OCI-LY7 (cell line): ENCODE measurements at regions of chr6 and their contacts with region 1.

Region 1: DNA sequence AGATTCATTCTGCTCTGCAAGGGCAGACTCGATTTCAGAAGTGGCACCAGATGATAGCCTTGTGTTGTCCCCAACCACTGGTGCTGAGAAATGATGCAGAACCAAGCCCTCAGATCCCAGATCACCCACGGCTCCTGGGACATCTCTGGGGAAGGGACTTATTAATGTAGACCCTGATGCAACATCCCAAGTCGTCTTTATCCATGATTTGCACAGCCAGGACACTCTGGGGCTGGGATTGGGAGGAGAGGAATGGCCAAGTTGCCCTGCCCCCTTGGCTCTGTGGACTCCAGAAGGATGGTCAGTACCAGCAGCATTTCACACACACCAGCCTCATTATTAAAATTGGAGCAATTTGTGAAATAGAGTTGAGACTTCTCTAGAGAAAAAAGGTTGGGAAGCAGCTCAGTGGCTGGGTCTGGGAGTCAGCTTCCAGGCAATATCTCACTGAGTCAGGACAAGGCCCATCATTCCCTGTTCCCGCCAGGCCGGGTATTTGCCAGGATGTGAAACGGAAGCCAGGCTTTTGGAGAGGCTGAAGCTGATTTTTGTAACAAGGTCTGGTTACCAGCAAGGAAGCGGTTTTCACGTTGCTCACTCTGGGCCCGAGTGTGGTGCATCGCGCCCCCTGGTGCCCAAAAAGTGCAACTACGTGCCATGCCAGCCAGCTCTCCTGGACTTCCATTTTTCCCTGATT is 67.4 kb downstream of the ZBTB2 start:
- DNase-seq: peak; percentile 65
- H3K4me3 ChIP-seq: no peak overlapping the region
- H3K27ac ChIP-seq: no peak overlapping the region
- H3K4me1 ChIP-seq: no peaks in the 10 kb centered on the region
- CTCF ChIP-seq: peak; percentile 97

Region 2: DNA sequence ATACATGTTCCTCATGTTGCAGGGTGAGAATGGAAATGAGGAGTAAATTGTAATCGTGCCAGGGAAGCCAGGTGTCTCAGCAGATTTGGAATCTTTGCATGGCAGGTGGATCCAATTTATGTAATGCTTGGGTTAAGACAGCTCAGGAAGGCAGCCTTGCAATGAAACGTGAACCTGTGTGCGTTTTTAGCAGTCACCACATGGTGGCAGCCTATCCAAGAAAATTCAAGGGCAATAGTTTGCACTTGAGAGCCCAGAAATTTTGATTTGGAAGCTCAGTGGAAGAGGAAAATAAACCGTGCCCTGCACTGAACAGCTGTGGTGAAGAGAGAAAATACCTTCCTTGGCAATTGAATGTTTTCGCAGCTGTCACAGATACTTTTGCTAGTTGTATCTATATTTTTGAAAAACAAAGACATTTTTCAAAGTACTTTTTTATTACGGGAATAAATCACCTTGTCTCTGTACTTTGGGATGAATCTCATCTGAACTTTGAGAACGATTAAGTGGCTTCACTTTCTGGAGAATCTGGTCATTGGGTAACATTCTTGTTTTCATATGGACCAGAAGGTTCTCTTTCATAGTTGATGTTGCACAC is 432.0 kb before region 1 on chr6:
- CTCF ChIA-PET with region 1: no interaction called
- POLR2A ChIA-PET with region 1: no interaction called
- intact Hi-C with region 1: loop called (anchors 5 kb)
- DNase-seq: peak; percentile 68
- H3K4me3 ChIP-seq: no peak overlapping the region
- H3K27ac ChIP-seq: no peak overlapping the region
- H3K4me1 ChIP-seq: peaks cover 21% of the 10 kb centered on the region
- CTCF ChIP-seq: peak; percentile 92

Region 3: GRCh38 chr6:151014404-151015100 is 309.4 kb before region 1 on chr6:
- CTCF ChIA-PET with region 1: interaction called, 6 read pairs
- POLR2A ChIA-PET with region 1: interaction called, 4 read pairs
- intact Hi-C with region 1: loop called (anchors 1 kb)
- DNase-seq: peak; percentile 67
- H3K4me3 ChIP-seq: no peak overlapping the region
- H3K27ac ChIP-seq: no peak overlapping the region
- H3K4me1 ChIP-seq: no peaks in the 10 kb centered on the region
- CTCF ChIP-seq: peak; percentile 94

Region 4: GRCh38 chr6:151307501-151307900 is 16.4 kb before region 1 on chr6:
- CTCF ChIA-PET with region 1: no interaction called
- POLR2A ChIA-PET with region 1: no interaction called
- intact Hi-C with region 1: no loop called
- DNase-seq: no peak
- H3K4me3 ChIP-seq: no peak overlapping the region
- H3K27ac ChIP-seq: no peak overlapping the region
- H3K4me1 ChIP-seq: no peaks in the 10 kb centered on the region
- CTCF ChIP-seq: no peak